Common myeloid progenitor, CD34-positive (primary cell): ENCODE measurements at regions of chr1 and their contacts with region 1.

Region 1: DNA sequence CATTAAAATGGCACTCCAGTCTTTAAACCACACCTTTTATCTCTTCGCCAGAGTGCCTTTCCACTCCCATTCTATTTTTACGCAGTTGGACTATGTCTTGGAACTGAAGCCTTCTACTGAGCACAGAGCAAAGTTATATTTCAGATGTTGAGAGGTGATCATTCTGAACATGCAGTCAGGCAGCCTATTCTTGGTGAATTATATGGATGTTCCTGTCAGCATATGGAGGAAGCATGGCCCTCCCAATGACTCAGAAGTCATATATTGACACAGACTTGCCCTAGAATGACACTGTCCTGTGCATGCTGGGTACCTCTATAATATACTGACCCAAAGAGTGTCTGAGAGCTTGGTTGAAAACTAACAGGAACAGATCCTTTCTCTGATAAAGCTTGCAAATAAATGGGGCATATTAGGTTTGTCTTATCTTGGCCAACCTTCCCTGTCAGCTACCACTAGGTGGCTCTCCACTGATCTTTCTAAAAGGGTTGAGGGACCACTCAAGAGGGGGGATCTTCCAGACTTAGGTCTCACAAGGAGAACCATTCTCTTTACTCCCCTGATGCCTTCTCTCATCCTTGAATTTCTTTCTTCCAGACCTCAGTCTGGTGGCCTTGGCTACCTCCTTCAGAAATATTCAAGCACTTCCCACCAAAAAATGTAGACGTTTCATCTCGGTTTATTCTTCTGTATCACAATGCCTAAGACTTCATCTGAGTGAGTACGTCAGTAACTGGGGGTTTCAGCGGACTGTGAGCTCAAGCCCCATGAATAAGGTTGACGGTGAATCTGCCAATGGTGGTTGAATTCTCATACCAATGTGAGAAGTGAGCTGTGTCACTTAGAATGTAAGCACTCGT is 11.8 kb upstream of the ALG14 start:
- DNase-seq: peak; percentile 47 to 65 (median 61)
- H3K4me3 ChIP-seq: no peak overlapping the region
- H3K27ac ChIP-seq: no peak overlapping the region
- H3K4me1 ChIP-seq: no peaks in the 10 kb centered on the region
- H3K27me3 ChIP-seq: peaks cover 0 to 4% (median 0%) of the 10 kb centered on the region in 5 experiments

Region 2: DNA sequence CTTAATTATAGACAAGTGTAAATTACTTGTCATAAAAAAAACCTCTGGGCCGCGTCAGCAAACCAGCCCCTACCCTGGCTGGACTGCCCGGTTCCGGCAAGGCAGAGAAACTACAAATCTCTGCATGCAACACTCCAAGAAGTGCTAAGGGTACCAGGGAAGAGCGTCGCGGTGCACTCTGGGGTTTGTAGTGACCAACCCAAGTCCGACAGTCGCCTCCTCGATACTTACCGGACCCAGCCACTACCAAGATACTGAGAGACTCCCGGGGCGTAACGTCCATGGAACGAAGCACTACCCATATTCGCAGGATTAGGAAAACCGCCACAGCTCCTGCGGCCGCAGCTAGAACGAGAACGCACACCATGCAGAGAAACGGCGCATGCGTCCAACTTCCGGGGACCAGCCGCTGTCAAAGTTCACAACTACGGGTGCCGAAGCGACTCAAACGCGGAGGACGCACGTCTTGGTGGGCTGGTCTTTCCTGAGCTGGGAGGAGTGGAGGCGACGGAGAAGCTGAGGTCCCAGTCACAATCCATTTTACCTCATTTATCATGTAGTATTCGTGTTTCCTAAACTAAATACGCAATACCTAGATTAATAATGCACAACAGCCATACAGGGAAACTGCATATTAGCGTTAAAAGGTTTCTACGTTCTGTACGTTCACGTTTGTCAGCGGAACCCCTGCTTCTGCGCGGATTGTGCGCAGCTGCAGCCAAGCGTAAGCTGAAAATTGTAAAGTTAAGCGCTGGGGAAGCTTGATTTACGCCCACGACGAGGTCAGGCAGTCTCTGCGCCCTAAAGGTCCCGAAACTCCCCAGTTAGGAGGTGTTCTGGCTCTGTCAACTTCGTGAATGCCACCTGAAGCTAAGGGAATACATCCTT is 11.8 kb before region 1 on chr1 and contains the start of gene ALG14:
- CTCF ChIA-PET with region 1: interaction called, 11 read pairs
- POLR2A ChIA-PET with region 1: no interaction called
- DNase-seq: peak; percentile 94 to 97 (median 97)
- H3K4me3 ChIP-seq: peak within 1 kb of the TSS; percentile 83 to 97 (median 90)
- H3K27ac ChIP-seq: peak within 1 kb of the TSS; percentile 50 to 74
- H3K4me1 ChIP-seq: peaks cover 11 to 15% (median 13%) of the 10 kb centered on the region in 4 experiments
- H3K27me3 ChIP-seq: peaks cover 0 to 4% (median 0%) of the 10 kb centered on the region in 5 experiments

Region 3: DNA sequence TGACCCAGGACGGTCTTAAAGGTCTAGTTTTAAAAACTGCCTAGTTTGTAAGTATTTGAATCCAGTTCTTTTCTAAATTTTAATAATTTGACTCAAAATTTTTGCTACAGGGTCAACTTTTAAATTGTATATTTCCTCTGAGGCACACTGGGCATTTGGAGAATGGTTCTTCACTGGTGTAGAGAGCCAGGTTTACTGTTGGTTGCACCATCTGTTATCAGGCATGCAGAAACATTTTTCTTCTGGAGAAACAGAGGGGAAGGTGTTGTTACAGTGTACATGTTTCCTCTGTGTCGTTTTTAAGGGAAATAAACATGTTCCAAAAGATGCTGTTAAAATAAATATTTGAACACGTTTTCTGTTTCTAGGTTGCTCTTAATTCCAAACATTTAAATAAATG is 110.5 kb after region 1 on chr1:
- CTCF ChIA-PET with region 1: no interaction called
- POLR2A ChIA-PET with region 1: no interaction called
- DNase-seq: no peak
- H3K4me3 ChIP-seq: no peak overlapping the region
- H3K27ac ChIP-seq: no peak overlapping the region
- H3K4me1 ChIP-seq: peaks cover 0 to 1% (median 0%) of the 10 kb centered on the region in 4 experiments
- H3K27me3 ChIP-seq: peaks cover 0 to 2% (median 0%) of the 10 kb centered on the region in 5 experiments